BJ (cell line): ENCODE measurements at regions of chr1 and their contacts with region 1.

Region 1: DNA sequence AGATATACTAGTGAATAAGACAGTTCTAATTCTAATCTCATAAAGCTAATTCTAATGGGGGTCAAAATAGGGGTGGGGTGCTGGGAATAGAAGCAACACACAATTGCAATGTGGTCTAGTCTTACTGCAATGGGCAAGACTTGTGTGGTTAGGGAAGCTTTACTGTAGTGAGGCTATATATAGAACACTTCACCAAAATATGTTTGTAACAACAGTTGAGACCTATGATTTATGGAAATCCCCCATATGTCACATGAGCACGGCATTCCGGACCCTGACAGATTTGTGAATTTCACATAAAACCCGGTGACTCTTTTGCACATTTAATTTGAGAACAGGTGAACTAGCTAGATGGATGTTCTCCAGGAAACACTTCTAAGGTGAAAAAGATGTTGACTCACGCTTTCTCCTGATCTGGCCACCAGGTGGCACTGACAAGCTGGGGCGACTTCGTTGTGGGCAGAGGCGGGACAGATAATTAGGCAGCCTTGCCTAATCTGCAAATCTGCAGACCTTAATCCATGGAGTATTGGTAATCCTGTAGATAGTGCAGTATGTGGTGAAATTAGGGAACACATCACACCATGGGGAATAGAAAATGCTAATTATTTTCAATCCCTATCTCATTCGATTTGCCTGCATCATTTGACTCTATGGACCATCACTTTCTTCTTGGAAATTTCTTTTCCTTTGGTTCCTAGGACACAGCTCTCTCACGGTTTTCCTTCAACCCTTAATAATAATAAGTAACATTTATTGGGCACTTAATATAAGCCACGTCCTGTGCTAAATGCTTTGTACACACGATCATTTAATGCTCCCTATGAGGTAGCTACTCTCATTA is 37.7 kb downstream of the KIAA0040 start:
- DNase-seq: no peak
- H3K4me3 ChIP-seq: no peak overlapping the region
- H3K27me3 ChIP-seq: no peaks in the 10 kb centered on the region; the same call in none of the 2 replicates
- CTCF ChIP-seq: peak; percentile 91

Region 2: GRCh38 chr1:174769961-174770549 is 384.8 kb before region 1 on chr1:
- CTCF ChIA-PET with region 1: no interaction called
- POLR2A ChIA-PET with region 1: no interaction called
- DNase-seq: peak; percentile 18
- H3K4me3 ChIP-seq: no peak overlapping the region
- H3K27me3 ChIP-seq: no peaks in the 10 kb centered on the region
- CTCF ChIP-seq: peak; percentile 69

Region 3: GRCh38 chr1:174858301-174858700 is 296.6 kb before region 1 on chr1:
- CTCF ChIA-PET with region 1: no interaction called
- POLR2A ChIA-PET with region 1: no interaction called
- DNase-seq: no peak
- H3K4me3 ChIP-seq: no peak overlapping the region
- H3K27me3 ChIP-seq: no peaks in the 10 kb centered on the region
- CTCF ChIP-seq: no peak

Region 4: GRCh38 chr1:175138579-175138978 is 16.3 kb before region 1 on chr1:
- CTCF ChIA-PET with region 1: interaction called, 36 read pairs
- POLR2A ChIA-PET with region 1: no interaction called
- DNase-seq: no peak
- H3K4me3 ChIP-seq: no peak overlapping the region
- H3K27me3 ChIP-seq: peaks cover 5% of the 10 kb centered on the region
- CTCF ChIP-seq: no peak

Region 5: GRCh38 chr1:175174309-175175165 is 19.7 kb after region 1 on chr1:
- CTCF ChIA-PET with region 1: interaction called, 13 read pairs
- POLR2A ChIA-PET with region 1: no interaction called
- DNase-seq: no peak
- H3K4me3 ChIP-seq: no peak overlapping the region
- H3K27me3 ChIP-seq: no peaks in the 10 kb centered on the region
- CTCF ChIP-seq: no peak

Region 6: GRCh38 chr1:175307160-175307559 is 152.3 kb after region 1 on chr1:
- CTCF ChIA-PET with region 1: interaction called, 18 read pairs
- POLR2A ChIA-PET with region 1: no interaction called
- DNase-seq: no peak
- H3K4me3 ChIP-seq: no peak overlapping the region
- H3K27me3 ChIP-seq: peaks cover 1% of the 10 kb centered on the region; the same call in 1 of the 2 replicates
- CTCF ChIP-seq: no peak

Region 7: GRCh38 chr1:175319418-175320230 is 164.8 kb after region 1 on chr1:
- CTCF ChIA-PET with region 1: interaction called, 126 read pairs
- POLR2A ChIA-PET with region 1: no interaction called
- DNase-seq: peak; percentile 3
- H3K4me3 ChIP-seq: no peak overlapping the region
- H3K27me3 ChIP-seq: no peaks in the 10 kb centered on the region
- CTCF ChIP-seq: peak; percentile 85